Heart right ventricle (tissue), 16 donors: ENCODE measurements at regions of chrX and their contacts with region 1.

Region 1: DNA sequence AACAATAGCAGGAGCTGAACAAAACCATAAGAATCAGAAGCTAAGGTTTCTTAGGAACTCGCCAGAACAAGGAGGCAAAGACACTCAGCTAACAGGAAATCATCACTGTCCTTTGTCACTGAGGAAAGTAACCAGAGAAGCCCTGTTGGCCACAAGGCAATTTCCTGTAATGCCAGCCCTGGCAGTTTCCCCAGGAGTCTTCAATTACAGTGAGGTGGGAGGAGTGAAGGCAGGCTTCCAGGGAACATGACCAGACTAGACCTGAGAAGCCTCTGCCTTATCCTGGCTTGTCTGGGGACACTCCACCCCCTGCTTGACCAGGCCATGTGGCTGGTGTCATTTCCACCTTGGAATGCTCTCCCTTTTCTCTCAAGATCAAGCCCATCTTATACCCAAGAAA is 125.3 kb downstream of the COL4A6 start:
- DNase-seq: peak; percentile 20 to 58
- ATAC-seq: peak; percentile 51 to 96 (median 84)
- H3K4me3 ChIP-seq: no peak overlapping the region
- H3K27ac ChIP-seq: no peak overlapping the region
- H3K4me1 ChIP-seq: peaks cover 0 to 2% (median 0%) of the 10 kb centered on the region in 9 donors
- H3K27me3 ChIP-seq: peaks cover 0 to 33% (median 0%) of the 10 kb centered on the region in 7 donors
- CTCF ChIP-seq: no peak

Region 2: GRCh38 chrX:108399427-108400162 is 86.7 kb after region 1 on chrX:
- intact Hi-C with region 1: loop called in 1 of 10 experiments (anchors 10 kb)
- DNase-seq: no peak
- ATAC-seq: no peak
- H3K4me3 ChIP-seq: no peak overlapping the region
- H3K27ac ChIP-seq: no peak overlapping the region
- H3K4me1 ChIP-seq: peaks cover 0 to 4% (median 0%) of the 10 kb centered on the region in 9 donors
- H3K27me3 ChIP-seq: peaks cover 0 to 48% (median 0%) of the 10 kb centered on the region in 7 donors
- CTCF ChIP-seq: no peak

Region 3: DNA sequence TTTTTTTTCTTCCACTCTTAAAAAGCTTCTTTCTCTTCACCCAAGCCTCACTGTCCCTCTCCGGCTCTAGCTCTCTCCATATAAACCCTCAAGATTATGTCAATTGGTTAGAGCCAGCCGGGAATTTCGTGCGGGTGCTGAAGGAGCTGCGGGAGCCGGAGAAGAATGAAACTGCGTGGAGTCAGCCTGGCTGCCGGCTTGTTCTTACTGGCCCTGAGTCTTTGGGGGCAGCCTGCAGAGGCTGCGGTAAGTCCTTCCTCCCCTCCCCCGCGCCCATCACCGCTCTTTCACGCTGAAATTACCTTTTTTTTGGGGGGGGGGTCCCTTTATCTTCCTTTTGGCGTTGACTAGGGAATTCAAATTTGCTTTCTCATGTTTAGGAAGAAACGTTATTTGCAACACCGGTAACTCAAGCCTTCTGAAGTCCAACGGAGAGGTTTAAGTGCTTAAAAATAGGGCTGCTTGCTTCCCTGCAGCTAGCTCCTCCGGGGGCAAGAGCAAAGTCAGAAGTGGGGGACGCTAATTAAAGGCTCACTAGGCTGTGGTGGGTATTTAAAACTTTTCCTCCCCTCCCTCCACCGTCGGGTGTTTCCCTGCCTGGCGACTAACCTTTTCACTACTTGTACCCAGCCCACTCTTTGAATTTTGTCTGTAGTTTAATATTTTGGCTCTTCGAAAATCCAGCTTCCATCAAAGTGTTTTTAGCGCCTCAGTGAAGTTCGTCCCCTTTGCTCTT is 127.2 kb after region 1 on chrX:
- intact Hi-C with region 1: loop called in 1 of 10 experiments (anchors 10 kb)
- DNase-seq: peak in 1 of 2 donors; percentile 12
- ATAC-seq: peak; percentile 34 to 77 (median 66)
- H3K4me3 ChIP-seq: peak overlapping the region; percentile 25 to 62 (median 52)
- H3K27ac ChIP-seq: peak overlapping the region in 9 of 10 donors; percentile 15 to 76 (median 70)
- H3K4me1 ChIP-seq: peaks cover 0 to 3% (median 0%) of the 10 kb centered on the region in 9 donors
- H3K27me3 ChIP-seq: peaks cover 0 to 74% (median 0%) of the 10 kb centered on the region in 7 donors
- CTCF ChIP-seq: no peak